ENCODE measurements at regions of chr2 and their contacts with region 1.

Region 1: GRCh38 chr2:218036361-218036760 is 32.7 kb upstream of the RUFY4 start:
- DNase-seq: no peak
- H3K4me3 ChIP-seq: no peak overlapping the region
- CTCF ChIP-seq: peak; percentile 18

Region 2: GRCh38 chr2:217785544-217786045 is 250.8 kb before region 1 on chr2:
- in situ Hi-C with region 1: loop called (anchors 5 kb)
- DNase-seq: peak; percentile 33
- H3K4me3 ChIP-seq: no peak overlapping the region
- CTCF ChIP-seq: peak; percentile 93